Right ventricle myocardium superior (tissue), 1 donor: ENCODE measurements at regions of chr17 and their contacts with region 1.

Region 1: DNA sequence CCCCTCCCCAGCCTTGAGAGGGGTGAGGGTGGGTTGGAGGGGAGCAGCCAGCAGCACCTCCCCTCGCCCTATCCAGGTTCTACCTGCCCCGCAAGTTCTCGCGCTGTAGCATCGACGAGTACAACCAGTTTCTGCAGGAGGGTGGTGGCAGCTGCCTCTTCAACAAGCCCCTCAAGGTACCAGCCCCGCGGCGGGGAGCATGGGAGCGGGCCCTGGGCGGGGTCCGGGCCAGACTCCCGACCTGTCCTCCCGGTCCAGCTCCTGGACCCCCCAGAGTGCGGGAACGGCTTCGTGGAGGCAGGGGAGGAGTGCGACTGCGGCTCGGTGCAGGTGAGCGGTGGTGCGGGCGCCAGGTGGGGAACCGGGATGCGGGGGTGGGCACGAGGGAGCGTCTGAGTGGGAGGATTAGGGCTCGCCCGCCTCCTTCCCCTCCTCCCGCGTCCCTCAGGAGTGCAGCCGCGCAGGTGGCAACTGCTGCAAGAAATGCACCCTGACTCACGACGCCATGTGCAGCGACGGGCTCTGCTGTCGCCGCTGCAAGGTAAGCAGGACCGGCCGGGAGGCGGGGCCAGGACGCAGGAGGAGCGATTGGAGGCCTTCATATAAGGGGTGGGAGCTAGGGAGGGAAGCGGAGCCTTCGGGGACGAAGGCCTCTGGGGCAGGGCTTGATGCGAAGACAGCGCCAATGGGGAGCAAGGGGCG is 16.5 kb downstream of the ADAM11 start:
- DNase-seq: peak; percentile 98
- ATAC-seq: peak; percentile 93

Region 2: DNA sequence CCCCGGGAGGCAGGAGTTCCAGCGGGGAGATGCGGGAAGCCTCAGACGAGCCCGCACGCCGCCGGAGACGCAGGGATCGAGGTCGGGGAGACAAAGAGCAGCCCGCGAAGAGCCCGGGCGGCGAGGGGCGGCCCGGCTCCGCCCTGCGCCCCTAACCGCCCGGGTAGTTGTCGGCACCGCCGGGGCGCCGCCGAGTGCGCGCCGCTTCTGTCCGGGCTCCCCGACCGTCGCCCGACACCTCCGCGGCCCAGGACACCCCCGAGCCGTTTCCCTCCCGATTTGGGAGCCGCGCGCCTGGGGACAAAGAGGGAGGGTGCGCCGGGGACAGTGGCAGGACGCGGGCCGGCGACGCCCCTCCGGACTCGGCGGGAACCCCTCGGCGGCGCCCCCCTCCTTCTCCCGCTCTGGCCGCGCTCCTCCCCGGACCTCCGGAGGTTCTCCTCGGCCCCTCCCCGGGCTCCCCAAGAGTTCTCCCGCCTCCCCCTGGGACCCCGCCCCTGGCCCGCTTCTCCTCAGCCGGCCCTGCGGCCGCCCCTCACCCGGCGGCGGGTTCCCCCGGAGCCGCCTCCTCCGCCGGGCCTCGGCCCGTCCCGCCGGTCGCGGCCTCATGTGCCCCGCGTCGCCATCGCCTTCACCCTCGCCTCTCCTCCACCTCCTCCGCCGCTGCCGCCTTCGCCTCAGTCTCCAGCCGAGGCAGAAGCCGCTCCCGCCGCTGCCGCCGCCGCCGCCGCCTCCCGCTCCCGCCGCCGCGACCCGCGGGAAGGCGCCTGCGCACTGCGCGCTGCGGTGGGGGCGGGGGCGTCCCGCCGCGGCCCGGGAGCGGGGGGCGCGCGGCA is 54.5 kb after region 1 on chr17 and contains the start of gene GJC1:
- intact Hi-C with region 1: loop called (anchors 5 kb)
- DNase-seq: peak; percentile 57
- ATAC-seq: peak; percentile 74
- total RNA-seq, gene GJC1: 16.1 TPM

Region 3: GRCh38 chr17:44864866-44865660 is 89.8 kb after region 1 on chr17:
- intact Hi-C with region 1: loop called (anchors 2 kb)
- DNase-seq: peak; percentile 67
- ATAC-seq: peak; percentile 82

Region 4: DNA sequence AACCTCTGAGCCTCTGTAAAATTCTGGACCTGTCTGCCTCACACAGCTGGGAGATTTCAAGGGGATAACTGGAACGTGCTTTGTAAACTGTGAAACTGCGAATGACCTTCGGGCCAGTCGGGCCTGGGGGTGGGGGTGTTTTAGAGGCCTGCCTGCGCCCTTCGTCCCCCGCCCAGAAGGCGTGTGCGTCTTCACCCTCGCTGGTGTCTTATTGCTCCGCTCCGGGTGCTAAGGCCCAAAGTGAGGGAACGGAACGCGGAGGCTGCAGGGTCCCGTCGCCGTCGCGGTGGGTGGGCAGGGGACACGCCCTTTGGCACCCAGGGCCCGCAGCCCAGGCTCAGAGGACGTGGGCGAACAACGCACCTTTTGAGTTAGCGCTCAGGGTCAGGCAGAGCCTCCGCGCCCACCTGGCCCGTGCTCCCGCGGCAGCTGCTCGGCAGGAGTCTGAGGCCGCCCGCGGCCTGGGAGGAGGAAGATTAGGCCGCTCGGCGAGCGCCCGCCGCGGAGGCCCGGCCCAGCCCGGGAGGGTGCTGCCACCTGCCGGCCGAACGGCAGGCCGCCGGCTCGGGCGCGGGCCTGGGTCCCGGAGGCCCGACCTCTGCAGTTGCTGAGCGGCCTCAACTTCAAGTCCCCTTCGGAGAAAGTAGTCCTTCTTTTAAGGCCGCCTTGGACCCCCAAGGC is 246.5 kb after region 1 on chr17:
- intact Hi-C with region 1: loop called (anchors 10 kb)
- DNase-seq: peak; percentile 84
- ATAC-seq: peak; percentile 83